GM10248 (cell line): ENCODE measurements at regions of chr1 and their contacts with region 1.

Region 1: GRCh38 chr1:24150234-24151174 is 7.6 kb upstream of the IL22RA1 start:
- DNase-seq: peak; percentile 86
- CTCF ChIP-seq: peak; percentile 97

Region 2: DNA sequence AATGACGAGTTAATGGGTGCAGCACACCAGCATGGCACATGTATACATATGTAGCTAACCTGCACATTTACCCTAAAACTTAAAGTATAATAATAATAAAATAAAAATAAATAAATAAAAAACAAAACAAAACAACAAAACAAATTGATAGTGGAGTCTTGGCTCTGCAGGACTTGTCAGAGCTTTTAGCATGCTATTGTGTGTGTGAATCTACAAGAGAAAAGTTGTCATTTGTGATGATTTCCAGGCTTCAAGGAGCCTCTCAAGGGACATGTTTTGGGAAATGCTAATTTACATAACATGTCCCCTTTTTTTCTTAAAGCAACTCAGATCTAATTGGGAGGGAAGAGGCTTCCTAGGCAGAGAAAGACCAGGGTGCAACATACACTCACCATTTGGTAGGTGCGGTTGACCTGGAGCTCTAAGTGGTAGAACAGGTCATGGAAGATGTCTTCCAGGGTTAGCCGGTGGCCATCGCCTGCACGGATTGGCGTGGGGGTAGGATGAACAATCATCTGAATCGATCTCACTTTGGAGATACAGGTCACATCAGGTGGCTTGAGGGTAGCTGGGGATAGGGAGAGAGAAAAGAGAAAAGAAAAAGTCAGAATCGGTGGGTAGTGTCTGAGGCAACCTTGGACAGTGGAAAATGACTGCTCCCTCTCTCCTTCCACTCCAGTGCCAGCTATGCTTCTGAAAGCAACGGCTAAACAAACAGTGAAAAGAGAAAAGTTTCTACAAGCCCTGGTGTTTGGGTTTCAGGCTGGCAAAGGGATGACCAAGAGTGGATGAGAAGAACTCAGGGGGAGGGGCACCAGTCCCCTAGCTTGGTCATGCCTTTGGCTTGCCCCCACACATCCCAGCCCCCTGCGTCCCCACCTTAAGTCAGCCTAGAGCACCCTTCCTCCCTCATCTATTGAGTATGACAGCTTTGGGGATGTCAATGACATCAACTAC is 16.4 kb before region 1 on chr1:
- CTCF ChIA-PET with region 1: interaction called, 37 read pairs
- POLR2A ChIA-PET with region 1: no interaction called
- DNase-seq: no peak
- CTCF ChIP-seq: no peak

Region 3: DNA sequence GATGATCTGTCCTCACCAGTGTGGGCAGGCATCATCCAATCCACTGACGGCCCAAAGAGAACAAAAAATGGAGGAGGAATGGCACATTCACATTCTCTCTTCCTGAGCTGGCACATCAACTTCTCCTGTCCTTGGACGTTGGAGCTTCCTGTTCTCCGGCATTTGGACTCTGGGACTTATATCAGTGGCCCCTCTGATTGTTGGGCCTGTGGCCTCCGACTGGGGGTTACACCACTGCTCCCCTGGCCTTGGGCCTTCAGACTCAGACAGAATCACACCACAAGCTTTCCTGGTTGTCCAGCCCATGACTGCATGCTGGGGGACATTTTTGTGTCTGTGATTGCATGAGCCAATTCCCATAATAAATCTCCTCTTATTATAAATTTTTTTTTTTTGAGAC is 16.5 kb after region 1 on chr1:
- CTCF ChIA-PET with region 1: interaction called, 18 read pairs
- POLR2A ChIA-PET with region 1: no interaction called
- DNase-seq: no peak
- CTCF ChIP-seq: no peak

Region 4: DNA sequence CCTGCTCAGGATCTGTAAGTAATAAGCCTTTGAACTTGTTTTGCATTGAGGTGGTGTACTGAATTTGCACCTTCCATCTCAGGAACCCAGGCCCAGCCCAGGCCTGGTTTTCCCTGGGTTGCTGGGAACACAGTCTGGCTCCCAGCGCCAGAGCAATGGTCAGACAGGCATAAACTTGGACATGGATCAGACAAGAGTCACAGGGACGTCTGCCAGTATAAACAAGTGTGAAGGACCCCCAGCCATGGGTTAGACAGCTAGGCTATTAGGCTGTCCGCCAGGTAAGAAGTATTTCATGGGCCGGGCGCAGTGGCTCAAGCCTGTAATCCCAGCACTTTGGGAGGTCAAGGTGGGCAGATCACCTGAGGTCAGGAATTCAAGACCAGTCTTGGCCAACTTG is 31.1 kb after region 1 on chr1:
- CTCF ChIA-PET with region 1: interaction called, 11 read pairs
- POLR2A ChIA-PET with region 1: no interaction called
- DNase-seq: no peak
- CTCF ChIP-seq: no peak

Region 5: DNA sequence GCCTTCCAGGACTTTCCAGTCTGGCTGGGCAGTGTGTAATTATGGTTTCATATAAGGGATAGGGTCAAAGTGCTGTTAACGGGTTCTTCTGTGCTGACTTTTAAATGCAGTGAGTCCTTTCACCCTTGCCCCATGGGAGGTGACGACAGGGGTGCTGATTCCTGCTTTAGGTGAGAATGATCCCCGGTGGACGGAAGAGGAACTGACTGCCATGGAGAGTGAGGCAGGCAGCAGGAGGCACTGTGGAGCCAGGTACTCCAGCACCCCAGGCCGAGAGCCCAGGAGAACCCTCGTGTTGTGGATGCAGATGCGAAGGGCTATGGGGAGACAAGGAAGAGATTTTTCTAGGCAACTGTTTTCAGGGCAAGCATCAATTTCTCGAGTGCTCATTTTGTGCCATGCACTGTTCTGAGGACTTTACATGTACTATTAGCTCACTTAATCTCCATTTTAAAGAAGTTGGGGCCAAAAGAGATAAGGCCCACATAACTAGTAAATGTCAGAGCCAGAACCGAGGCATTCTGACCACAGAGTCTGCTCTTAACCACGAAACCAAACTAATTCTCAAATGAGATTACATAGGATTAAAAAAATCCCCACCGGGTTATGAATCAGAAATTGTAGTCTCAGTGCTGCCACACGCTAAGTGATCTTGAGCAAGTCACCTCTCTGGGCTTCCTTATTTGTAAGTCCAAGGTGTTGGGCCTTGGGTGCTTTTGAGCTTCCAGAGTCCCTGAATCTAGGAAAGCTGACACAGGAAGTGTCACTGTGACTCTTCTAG is 234.8 kb after region 1 on chr1:
- CTCF ChIA-PET with region 1: interaction called, 136 read pairs
- POLR2A ChIA-PET with region 1: no interaction called
- DNase-seq: no peak
- CTCF ChIP-seq: peak; percentile 44

Region 6: GRCh38 chr1:24619376-24619775 is 468.9 kb after region 1 on chr1:
- CTCF ChIA-PET with region 1: no interaction called
- POLR2A ChIA-PET with region 1: no interaction called
- DNase-seq: no peak
- CTCF ChIP-seq: no peak